Heart left ventricle (tissue), 16 donors: ENCODE measurements at regions of chr16 and their contacts with region 1.

Region 1: GRCh38 chr16:1705688-1706385 is at the start of gene MAPK8IP3:
- DNase-seq: peak; percentile 89 to 97 (median 93)
- ATAC-seq: peak; percentile 65 to 93 (median 89)
- H3K4me3 ChIP-seq: peak within 1 kb of the TSS; percentile 74 to 99 (median 92)
- H3K27ac ChIP-seq: peak within 1 kb of the TSS; percentile 69 to 99 (median 94)
- H3K4me1 ChIP-seq: peaks cover 0 to 46% (median 32%) of the 10 kb centered on the region in 12 donors
- H3K27me3 ChIP-seq: no peaks in the 10 kb centered on the region
- CTCF ChIP-seq: peak; percentile 79 to 100 (median 97)
- POLR2A ChIP-seq: peak; percentile 77 to 98
- total RNA-seq, gene MAPK8IP3: 29.5 to 71.3 (median 63.1) TPM

Region 2: GRCh38 chr16:1308977-1309885 is 396.6 kb before region 1 on chr16 and contains the start of gene UBE2I:
- intact Hi-C with region 1: loop called in 1 of 10 experiments (anchors 2 kb)
- DNase-seq: peak; percentile 97 to 99 (median 97)
- ATAC-seq: peak; percentile 87 to 91 (median 90)
- H3K4me3 ChIP-seq: peak within 1 kb of the TSS; percentile 79 to 98 (median 84)
- H3K27ac ChIP-seq: peak within 1 kb of the TSS; percentile 95 to 100 (median 99)
- H3K4me1 ChIP-seq: peaks cover 8 to 43% (median 36%) of the 10 kb centered on the region in 12 donors
- H3K27me3 ChIP-seq: no peaks in the 10 kb centered on the region
- CTCF ChIP-seq: no peak
- POLR2A ChIP-seq: peak in 1 of 2 donors; percentile 23
- total RNA-seq, gene UBE2I: 59.3 to 105 (median 85.9) TPM

Region 3: GRCh38 chr16:1428511-1428910 is 277.3 kb before region 1 on chr16:
- intact Hi-C with region 1: loop called in 2 of 10 experiments (anchors 5 kb)
- DNase-seq: peak in 2 of 5 donors; percentile 44 to 48
- ATAC-seq: peak in 3 of 4 donors; percentile 46 to 59 (median 51)
- H3K4me3 ChIP-seq: peak overlapping the region in 10 of 12 donors; percentile 12 to 41 (median 31)
- H3K27ac ChIP-seq: peak overlapping the region in 3 of 12 donors; percentile 25 to 64 (median 53)
- H3K4me1 ChIP-seq: peaks cover 0 to 23% (median 1%) of the 10 kb centered on the region in 12 donors
- H3K27me3 ChIP-seq: no peaks in the 10 kb centered on the region
- CTCF ChIP-seq: peak; percentile 24 to 67 (median 47)
- POLR2A ChIP-seq: no peak

Region 4: DNA sequence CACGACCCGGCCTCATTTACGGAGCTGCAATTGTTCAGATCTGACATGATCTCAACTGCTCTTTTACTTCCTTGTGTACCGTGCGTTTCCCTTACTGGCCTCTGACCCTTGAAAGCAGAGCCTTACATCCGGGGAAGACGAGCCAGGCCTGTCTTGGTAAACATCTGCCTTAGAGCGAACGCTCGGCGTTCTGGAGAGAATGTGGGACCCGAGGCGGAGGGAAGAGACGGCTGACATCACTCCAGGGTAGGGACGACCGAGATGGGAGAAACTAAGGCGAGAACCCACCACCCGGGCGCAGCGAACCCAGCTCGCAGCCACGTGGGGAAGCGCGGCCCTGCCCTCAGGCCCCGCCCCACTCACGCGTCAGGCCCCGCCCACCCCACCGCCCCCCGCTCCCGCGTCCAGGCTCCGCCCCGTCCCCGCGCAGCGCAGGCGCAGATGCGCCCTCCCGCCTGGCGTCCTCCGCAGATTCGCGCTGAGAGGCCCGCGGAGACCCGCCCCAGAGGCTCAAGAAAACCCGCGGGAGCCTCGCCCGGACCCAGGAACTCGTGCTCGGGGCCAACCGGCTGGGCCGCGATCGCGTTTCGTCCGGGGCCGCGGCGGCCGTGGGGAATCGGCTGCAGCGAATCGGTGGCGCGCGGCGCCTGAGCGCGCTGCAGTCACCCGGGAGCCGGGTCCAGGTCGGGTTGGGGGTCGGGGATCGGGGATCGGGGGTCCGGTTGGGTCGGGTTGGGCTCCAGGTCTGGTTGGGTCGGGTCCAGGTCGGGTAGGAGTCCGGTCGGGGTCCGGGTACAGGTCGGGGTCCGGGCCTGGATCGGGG is 212.7 kb before region 1 on chr16 and contains the start of gene TELO2:
- intact Hi-C with region 1: loop called in 1 of 10 experiments (anchors 2 kb)
- DNase-seq: peak; percentile 80 to 93 (median 85)
- ATAC-seq: peak; percentile 69 to 93 (median 90)
- H3K4me3 ChIP-seq: peak within 1 kb of the TSS; percentile 59 to 92 (median 76)
- H3K27ac ChIP-seq: peak within 1 kb of the TSS; percentile 75 to 98 (median 88)
- H3K4me1 ChIP-seq: peaks cover 0 to 31% (median 24%) of the 10 kb centered on the region in 12 donors
- H3K27me3 ChIP-seq: no peaks in the 10 kb centered on the region
- CTCF ChIP-seq: no peak
- POLR2A ChIP-seq: peak in 1 of 2 donors; percentile 20
- total RNA-seq, gene TELO2: 11.8 to 29.6 (median 16.7) TPM

Region 5: DNA sequence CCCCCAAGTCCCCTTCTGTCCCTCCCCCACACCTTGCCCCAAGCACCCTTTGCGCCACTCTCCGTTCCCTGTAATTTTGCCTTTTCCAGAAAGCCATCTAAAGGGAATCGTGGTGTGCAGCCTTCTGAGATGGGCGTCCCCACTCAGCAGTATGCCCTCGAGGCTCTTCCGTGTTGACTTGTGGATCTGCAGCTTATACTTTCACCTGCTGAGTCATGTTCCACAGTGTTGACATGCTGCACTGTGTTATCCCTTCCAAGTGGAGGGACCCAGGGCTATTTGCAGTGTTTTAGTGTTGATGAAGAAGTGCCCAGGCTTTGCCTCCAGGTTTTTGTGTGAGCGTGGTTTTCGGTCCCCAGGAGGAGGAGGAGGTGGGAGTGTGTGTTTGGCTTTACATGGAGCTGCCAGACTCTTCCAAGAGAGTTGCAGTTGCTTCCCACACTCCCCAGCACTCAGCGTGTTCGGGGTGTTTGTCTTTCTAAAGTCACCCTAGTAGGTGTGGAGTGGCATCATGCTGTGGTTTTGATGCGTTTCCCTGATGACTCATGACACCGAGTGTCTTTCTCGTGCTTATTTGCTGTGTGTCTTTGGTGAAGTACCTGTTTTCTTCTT is 59.8 kb before region 1 on chr16:
- intact Hi-C with region 1: loop called in 1 of 10 experiments (anchors 10 kb)
- DNase-seq: no peak
- ATAC-seq: no peak
- H3K4me3 ChIP-seq: no peak overlapping the region
- H3K27ac ChIP-seq: no peak overlapping the region
- H3K4me1 ChIP-seq: peaks cover 0 to 19% (median 5%) of the 10 kb centered on the region in 12 donors
- H3K27me3 ChIP-seq: no peaks in the 10 kb centered on the region
- CTCF ChIP-seq: no peak
- POLR2A ChIP-seq: no peak

Region 6: DNA sequence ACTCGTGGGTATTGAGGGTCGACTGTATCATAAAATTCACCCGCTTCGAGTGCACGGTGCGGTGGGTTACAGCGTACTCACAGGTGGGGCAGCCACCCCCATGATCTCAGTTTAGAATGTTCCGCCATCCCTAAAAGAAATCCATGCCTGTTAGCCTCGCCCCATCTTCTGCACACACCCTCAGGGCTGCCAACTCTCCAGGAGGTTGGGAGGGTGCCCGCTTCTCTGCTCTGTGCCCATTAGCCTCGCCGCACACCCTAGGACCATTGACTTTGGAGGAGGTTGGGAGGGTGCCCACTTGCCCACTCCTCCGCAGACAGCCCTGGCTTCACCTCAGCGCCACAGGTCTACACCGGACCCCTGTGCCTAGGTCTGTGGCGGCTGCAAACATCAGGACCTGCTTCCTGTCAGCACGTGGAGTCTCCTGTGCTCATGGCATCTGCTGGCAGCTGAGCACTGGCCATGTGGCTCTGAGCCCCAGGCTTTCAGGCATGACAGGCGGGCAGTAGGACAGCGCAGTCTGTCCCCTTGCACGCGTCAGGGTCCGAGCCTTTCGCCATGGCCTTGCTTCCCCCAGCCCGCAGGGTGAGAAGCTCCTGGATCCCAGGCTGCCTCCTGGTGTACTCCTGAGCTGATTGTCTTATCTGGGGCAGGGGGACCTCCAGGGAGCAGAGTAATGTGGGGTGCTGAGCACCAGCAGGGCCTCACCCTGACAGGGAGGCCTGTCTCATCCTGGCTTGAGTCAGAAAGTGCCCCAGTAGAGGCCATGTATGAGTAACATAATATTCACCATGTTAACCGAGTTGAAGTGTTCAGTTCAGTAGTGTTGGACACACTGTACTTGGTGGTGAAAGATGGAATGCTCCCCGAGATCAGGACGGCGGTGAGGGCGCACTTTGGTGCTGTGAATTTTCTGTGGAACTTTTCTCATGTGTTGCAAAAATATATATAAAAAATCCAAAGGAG is 43.6 kb after region 1 on chr16:
- intact Hi-C with region 1: no loop called
- DNase-seq: peak in 1 of 5 donors; percentile 54
- ATAC-seq: no peak
- H3K4me3 ChIP-seq: no peak overlapping the region
- H3K27ac ChIP-seq: no peak overlapping the region
- H3K4me1 ChIP-seq: no peaks in the 10 kb centered on the region
- H3K27me3 ChIP-seq: no peaks in the 10 kb centered on the region
- CTCF ChIP-seq: no peak
- POLR2A ChIP-seq: no peak

Region 7: DNA sequence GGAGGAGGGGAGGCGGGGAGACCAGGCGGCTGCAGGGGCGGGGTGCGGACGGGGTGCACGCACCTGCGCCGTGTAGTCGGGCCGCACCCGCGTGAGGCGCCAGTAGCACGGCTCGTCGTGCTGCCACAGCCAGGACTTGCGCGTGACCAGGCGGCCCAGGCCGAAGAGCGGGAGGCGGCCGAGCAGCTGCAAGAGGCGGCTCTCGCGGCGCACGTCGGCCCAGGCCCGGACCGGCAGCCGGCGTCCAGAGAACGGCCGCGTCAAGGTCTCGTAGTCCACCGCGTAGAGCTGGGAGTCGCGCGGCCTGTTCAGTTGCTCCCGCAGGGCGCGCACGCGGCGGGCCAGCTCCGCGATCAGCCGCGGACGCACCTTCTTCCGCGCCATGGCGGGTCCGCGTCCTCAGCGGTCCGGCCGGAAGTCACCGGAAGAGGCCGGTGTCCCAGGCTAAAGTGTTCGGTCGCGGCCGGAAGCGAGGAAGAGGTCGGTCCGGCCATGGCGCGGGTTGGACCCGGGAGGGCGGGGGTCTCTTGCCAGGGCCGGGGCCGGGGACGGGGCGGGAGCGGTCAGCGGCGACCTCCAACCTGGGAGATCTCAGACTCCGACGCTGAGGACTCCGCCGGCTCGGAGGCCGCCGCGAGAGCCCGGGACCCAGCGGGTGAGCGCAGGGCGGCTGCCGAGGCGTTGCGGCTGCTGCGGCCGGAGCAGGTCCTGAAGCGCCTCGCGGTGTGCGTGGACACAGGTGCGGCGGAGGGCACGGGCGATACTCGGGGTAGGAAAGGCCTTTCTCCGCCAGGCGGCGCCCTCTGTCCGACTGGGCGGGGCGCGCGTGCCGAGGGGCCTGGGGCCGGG is 67.1 kb after region 1 on chr16 and contains the starts of genes EME2 and MRPS34:
- intact Hi-C with region 1: loop called in 1 of 10 experiments (anchors 5 kb)
- DNase-seq: peak; percentile 83 to 93 (median 88)
- ATAC-seq: peak; percentile 18 to 67 (median 64)
- H3K4me3 ChIP-seq: peak within 1 kb of the TSS; percentile 75 to 99 (median 96)
- H3K27ac ChIP-seq: peak within 1 kb of the TSS; percentile 91 to 99 (median 97)
- H3K4me1 ChIP-seq: peaks cover 14 to 44% (median 32%) of the 10 kb centered on the region in 12 donors
- H3K27me3 ChIP-seq: no peaks in the 10 kb centered on the region
- CTCF ChIP-seq: peak; percentile 56 to 86 (median 71)
- POLR2A ChIP-seq: peak in 1 of 2 donors; percentile 69
- total RNA-seq, gene EME2: 3.4 to 12.9 (median 6.0) TPM
- total RNA-seq, gene MRPS34: 58.0 to 123 (median 79.3) TPM